ENCODE measurements at regions of chr2 and their contacts with region 1.

Region 1: GRCh38 chr2:111698743-111699554 is 185.0 kb downstream of the ANAPC1 start:
- DNase-seq: peak; percentile 92 to 96 (median 94)
- ATAC-seq: peak; percentile 97
- H3K4me3 ChIP-seq: no peak overlapping the region
- H3K27ac ChIP-seq: peak overlapping the region; percentile 91
- H3K4me1 ChIP-seq: peaks cover 10 to 32% of the 10 kb centered on the region in 2 experiments; a peak in 4 of 5 replicates
- H3K27me3 ChIP-seq: no peaks in the 10 kb centered on the region
- CTCF ChIP-seq: peak; percentile 65 to 80 (median 78)
- EP300 ChIP-seq: peak; percentile 86
- POLR2A ChIP-seq: peak; percentile 62; the same call in 1 of the 2 replicates
- RAD21 ChIP-seq: peak; percentile 88 to 89

Region 2: DNA sequence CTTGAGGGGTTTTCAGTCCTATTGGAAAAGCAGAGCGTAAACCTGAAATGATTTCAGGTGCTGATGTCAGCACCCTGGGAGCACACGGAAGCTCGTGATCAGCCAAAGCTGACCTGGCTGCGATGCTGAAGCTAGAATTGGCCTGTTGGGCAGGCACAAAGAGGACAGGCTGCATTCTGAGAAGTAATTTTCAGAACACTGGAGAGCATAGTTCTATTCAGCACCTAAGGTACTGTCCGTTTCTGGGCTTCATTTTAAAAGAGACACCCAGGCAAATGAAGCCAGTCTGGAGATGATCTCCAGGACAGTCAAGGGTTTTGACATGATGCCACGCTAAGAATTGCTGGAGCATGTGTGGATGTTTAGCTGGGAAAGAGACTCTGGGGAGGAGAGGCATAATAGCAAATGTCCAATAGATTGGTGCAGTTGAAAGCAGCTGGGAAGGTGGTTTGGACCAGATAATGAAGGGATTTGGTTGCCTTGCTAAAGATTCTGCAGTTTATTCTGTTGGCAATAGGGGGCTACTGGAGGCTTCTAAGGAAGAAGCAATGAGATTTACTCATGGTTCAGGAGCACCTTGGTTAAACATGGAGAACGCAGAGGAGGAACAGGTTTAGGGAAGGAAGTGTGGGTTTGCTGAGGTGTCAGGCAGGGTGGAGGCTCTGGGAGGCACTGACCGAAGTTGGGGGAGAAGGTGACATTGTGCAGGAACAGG is 880.0 kb before region 1 on chr2:
- CTCF ChIA-PET with region 1: no interaction called
- POLR2A ChIA-PET with region 1: no interaction called
- in situ Hi-C with region 1: loop called (anchors 25 kb)
- intact Hi-C with region 1: loop called (anchors 10 kb)
- DNase-seq: no peak
- ATAC-seq: no peak
- H3K4me3 ChIP-seq: no peak overlapping the region
- H3K27ac ChIP-seq: no peak overlapping the region
- H3K4me1 ChIP-seq: no peaks in the 10 kb centered on the region
- H3K27me3 ChIP-seq: peaks cover 6 to 24% of the 10 kb centered on the region in 2 experiments; a peak in 3 of 5 replicates
- CTCF ChIP-seq: peak; percentile 13 to 22 (median 18); a peak in 3 of 6 replicates
- EP300 ChIP-seq: no peak
- POLR2A ChIP-seq: no peak
- RAD21 ChIP-seq: no peak

Region 3: GRCh38 chr2:110900191-110900590 is 798.8 kb before region 1 on chr2:
- CTCF ChIA-PET with region 1: no interaction called
- POLR2A ChIA-PET with region 1: no interaction called
- in situ Hi-C with region 1: no loop called
- intact Hi-C with region 1: no loop called
- DNase-seq: no peak
- ATAC-seq: no peak
- H3K4me3 ChIP-seq: no peak overlapping the region
- H3K27ac ChIP-seq: no peak overlapping the region
- H3K4me1 ChIP-seq: no peaks in the 10 kb centered on the region
- H3K27me3 ChIP-seq: peaks cover 0 to 9% of the 10 kb centered on the region in 2 experiments; a peak in 2 of 5 replicates
- CTCF ChIP-seq: no peak
- EP300 ChIP-seq: no peak
- POLR2A ChIP-seq: no peak
- RAD21 ChIP-seq: no peak

Region 4: DNA sequence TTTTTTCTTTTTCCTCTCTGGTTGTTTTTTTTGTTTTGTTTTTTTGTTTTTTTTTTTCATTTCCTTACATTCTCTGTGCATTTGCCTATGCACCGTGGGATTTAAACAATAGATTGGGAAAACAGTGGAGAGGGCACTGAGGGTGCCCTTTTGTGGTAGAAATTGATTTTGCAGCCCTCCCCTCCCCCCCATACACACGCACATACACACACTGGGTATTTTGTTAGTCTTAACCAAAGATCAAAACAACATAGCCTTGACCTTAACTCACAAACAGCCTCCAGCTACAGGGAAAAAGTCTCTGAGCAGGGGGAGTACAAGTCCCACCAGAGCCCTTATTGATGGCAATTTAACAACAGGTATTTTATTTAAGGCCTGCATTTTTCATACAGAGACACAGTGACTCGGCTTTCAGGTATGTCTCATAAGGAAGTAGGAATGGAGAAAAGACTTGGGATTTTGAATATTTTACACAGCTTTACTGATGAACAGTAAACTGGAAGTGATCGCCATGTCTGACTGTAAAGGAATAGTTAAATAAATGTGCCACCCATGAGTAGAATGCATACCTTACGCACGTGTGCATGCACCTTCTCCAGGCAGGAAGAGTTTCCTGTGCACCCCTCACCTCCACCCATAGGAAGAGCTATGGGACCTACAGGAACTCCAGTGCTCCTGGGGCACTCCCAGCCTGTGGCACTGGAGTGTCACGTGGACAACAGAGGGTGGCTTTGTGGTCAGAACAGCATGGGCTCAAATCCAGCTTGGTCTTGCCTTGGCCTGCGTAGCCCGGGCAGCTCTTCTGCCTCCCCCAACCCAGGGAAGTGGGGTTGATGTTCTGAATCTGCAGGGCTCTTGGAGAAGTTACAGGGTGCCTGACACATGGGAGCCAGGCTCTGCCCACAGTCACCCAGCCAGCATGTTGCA is 81.4 kb before region 1 on chr2:
- CTCF ChIA-PET with region 1: interaction called, 3 read pairs
- POLR2A ChIA-PET with region 1: no interaction called
- in situ Hi-C with region 1: loop called (anchors 5 kb)
- intact Hi-C with region 1: loop called (anchors 1 kb)
- DNase-seq: no peak
- ATAC-seq: no peak
- H3K4me3 ChIP-seq: no peak overlapping the region
- H3K27ac ChIP-seq: no peak overlapping the region
- H3K4me1 ChIP-seq: peaks cover 0 to 3% of the 10 kb centered on the region in 2 experiments; a peak in 1 of 5 replicates
- H3K27me3 ChIP-seq: no peaks in the 10 kb centered on the region
- CTCF ChIP-seq: no peak
- EP300 ChIP-seq: no peak
- POLR2A ChIP-seq: no peak
- RAD21 ChIP-seq: no peak

Region 5: DNA sequence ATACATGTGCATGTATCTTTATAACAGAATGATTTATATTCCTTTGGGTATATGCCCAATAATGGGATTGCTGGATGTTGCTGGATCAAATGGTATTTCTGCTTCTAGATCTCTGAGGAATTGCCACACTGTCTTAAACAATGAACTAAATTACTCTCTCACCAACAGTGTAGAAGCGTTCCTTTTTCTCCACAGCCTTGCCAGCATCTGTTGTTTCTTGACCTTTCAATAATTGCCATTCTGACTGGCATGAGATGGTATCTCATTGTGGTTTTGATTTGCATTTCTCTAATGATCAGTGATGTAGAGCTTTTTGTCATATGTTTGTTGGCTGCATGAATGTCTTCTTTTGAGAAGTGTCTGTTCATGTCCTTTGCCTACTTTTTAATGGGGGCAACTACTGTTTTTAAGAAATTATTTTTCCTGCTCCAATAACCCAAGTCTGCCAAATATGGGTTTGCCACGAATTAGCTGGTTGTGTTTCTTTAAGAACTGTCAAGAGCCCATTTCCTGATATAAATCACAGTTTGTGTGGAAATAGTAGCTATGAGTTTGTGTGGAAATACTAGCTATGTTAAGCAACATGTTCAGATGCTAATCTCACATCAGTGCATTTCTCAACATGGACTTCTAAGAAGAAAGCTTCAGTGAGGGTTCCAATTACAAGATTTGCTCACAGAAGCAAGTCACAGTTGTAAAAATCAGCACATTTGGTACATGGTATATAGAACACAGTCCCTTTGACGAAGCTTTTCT is 74.4 kb before region 1 on chr2:
- CTCF ChIA-PET with region 1: interaction called, 3 read pairs
- POLR2A ChIA-PET with region 1: no interaction called
- in situ Hi-C with region 1: loop called (anchors 5 kb)
- intact Hi-C with region 1: loop called (anchors 1 kb)
- DNase-seq: no peak
- ATAC-seq: no peak
- H3K4me3 ChIP-seq: no peak overlapping the region
- H3K27ac ChIP-seq: no peak overlapping the region
- H3K4me1 ChIP-seq: peaks cover 6 to 12% of the 10 kb centered on the region in 2 experiments; a peak in 4 of 5 replicates
- H3K27me3 ChIP-seq: no peaks in the 10 kb centered on the region
- CTCF ChIP-seq: no peak
- EP300 ChIP-seq: peak; percentile 52; the same call in 1 of the 2 replicates
- POLR2A ChIP-seq: no peak
- RAD21 ChIP-seq: no peak

Region 6: DNA sequence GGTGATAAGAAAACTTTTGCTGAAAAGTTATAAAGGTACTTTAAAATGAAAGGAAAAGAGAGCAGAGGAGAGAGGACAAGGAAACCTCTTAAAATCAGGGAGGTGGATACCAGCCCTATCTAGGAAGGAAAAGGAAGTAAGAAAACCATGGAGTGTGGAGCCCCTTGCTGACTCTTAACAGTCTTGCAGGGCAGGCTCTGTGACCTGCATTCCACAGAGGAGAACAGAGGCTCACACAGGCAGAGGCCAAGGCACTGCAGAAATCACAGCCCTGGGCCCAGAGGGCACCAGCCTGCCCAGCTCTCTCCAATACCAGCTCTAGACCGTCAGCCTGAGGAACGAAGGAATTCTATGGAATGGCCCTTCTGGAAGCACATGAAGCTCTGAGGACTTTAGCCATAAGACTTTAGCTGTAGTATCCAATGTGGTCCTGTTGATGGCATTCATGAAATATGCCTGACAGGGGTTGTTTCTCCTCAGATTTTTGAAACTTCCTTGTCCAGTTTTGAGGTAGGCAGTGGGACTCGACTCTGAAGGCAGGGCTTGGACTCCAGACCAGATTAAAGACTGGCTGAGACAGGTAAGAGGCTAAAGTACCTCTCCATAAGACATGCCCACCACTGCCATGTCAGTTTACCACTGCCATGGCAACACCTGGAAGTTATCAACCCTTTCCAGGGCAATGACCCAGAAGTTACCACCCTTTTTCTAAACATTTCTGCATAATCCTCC is 31.2 kb before region 1 on chr2:
- CTCF ChIA-PET with region 1: no interaction called
- POLR2A ChIA-PET with region 1: no interaction called
- in situ Hi-C with region 1: no loop called
- intact Hi-C with region 1: loop called (anchors 2 kb)
- DNase-seq: peak in 1 of 4 experiments; percentile 37
- ATAC-seq: peak; percentile 77
- H3K4me3 ChIP-seq: no peak overlapping the region
- H3K27ac ChIP-seq: no peak overlapping the region
- H3K4me1 ChIP-seq: peaks cover 7 to 16% of the 10 kb centered on the region in 2 experiments; a peak in 4 of 5 replicates
- H3K27me3 ChIP-seq: no peaks in the 10 kb centered on the region
- CTCF ChIP-seq: peak; percentile 31 to 70 (median 41); a peak in 3 of 6 replicates
- EP300 ChIP-seq: no peak
- POLR2A ChIP-seq: no peak
- RAD21 ChIP-seq: peak; percentile 83 to 84

Region 7: DNA sequence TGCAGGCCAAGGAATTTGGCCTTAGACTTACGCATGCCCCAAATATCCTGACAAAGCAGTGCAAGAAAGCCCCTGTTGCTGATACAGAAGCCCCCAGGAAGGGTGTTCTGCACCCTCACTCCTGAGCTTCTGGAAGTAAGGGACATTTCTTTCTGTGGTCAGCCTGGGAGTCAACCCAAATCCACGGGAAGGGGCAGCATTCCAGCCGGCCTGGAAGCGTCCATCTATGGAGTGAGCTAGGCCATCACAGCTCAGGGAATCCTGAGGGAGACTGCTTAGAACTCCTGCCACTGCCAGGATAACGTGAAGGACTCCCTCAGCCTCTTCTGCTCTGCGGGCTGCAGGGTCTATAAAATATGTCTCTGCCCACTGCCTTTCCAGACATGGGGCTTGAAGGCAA is 11.1 kb after region 1 on chr2:
- CTCF ChIA-PET with region 1: no interaction called
- POLR2A ChIA-PET with region 1: no interaction called
- in situ Hi-C with region 1: no loop called
- intact Hi-C with region 1: no loop called
- DNase-seq: no peak
- ATAC-seq: no peak
- H3K4me3 ChIP-seq: no peak overlapping the region
- H3K27ac ChIP-seq: no peak overlapping the region
- H3K4me1 ChIP-seq: no peaks in the 10 kb centered on the region; a peak in 2 of 5 replicates
- H3K27me3 ChIP-seq: no peaks in the 10 kb centered on the region
- CTCF ChIP-seq: no peak
- EP300 ChIP-seq: no peak
- POLR2A ChIP-seq: no peak
- RAD21 ChIP-seq: no peak

Region 8: DNA sequence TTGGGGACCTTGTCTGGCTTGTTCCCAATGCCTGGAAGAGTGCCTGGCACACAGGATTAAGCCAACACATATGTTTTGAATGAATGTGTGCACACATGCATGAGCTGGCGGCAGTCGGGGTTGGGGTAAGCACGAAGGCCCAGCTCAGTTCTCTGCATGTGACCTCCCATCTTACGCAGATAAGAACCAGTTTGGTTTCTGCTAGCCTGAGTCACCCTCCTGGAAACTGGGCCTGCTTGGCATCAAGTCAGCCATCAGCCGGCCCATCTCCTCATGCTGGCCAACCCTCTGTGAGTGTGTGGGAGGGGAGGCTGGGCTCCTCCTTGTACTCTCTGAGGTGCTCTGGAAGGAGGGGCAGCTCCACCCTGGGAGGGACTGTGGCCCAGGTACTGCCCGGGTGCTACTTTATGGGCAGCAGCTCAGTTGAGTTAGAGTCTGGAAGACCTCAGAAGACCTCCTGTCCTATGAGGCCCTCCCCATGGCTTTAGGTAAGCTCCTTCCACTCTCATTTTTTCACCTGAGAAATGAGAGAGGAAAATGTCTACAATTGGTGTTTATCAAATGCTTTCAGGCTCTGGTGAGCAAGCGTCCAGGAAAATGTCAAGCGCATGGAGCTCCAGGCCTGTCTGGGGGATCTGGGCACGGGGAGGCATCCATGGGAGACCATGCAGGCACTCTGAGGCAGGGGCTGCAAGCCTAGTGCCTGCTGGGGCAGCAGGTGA is 1418.8 kb after region 1 on chr2:
- CTCF ChIA-PET with region 1: no interaction called
- POLR2A ChIA-PET with region 1: no interaction called
- in situ Hi-C with region 1: no loop called
- intact Hi-C with region 1: no loop called
- DNase-seq: peak; percentile 21 to 62 (median 24)
- ATAC-seq: peak; percentile 78
- H3K4me3 ChIP-seq: no peak overlapping the region
- H3K27ac ChIP-seq: no peak overlapping the region
- H3K4me1 ChIP-seq: peaks cover 4 to 12% of the 10 kb centered on the region in 2 experiments; a peak in 3 of 5 replicates
- H3K27me3 ChIP-seq: peaks cover 4 to 16% of the 10 kb centered on the region in 2 experiments; a peak in 4 of 5 replicates
- CTCF ChIP-seq: no peak
- EP300 ChIP-seq: no peak
- POLR2A ChIP-seq: no peak
- RAD21 ChIP-seq: no peak